Dendritic cell treated with granulocyte-macrophage colony-stimulating factor and Interleukin-4, amounts not matched to agents 40 ng/mL and 50 ng/mL, for 4 days (primary cell): ENCODE measurements at regions of chr16 and their contacts with region 1.

Region 1: DNA sequence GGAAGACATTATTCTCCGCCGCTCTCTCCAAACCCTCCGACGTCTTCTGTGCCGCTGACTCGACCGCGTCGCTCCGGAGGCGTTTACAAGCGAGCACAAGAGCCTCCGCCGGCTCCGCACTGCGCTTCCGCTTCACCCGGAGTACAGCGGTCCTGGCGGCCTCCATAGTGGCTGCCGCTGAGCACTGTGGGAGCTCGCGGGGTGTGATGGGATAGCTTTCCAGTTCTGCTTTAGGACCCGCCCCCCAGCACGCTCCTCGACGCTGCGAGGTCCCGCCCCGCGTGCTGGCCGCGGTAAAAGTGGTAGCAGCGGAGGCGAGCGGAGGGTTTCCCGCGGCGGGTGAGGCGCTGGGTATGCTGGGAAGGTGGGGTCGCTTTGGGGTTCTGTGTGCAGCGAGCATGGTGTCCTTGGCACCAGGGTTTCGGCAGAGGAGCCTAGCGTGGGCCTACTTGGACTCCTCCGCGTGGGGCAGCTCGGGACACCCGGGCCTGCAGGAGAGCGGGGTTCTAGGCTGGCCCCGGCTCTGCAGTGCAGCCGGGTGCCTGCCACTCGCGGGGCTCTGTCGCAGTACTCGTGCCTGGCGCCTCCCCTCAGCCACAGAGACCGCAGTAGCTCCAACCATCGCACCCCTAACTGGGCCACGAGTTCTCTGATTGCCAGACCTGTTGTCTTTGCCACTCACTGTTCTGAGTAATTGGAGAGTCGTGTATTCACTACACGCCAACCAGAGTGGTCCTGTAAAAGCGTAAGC is at the starts of genes PRMT7 and SLC7A6OS:
- H3K4me3 Mint-ChIP-seq: peak within 1 kb of the TSS; percentile 92
- H3K27ac Mint-ChIP-seq: peak within 1 kb of the TSS; percentile 95
- H3K4me1 Mint-ChIP-seq: peaks cover 30% of the 10 kb centered on the region
- H3K27me3 Mint-ChIP-seq: no peaks in the 10 kb centered on the region

Region 2: DNA sequence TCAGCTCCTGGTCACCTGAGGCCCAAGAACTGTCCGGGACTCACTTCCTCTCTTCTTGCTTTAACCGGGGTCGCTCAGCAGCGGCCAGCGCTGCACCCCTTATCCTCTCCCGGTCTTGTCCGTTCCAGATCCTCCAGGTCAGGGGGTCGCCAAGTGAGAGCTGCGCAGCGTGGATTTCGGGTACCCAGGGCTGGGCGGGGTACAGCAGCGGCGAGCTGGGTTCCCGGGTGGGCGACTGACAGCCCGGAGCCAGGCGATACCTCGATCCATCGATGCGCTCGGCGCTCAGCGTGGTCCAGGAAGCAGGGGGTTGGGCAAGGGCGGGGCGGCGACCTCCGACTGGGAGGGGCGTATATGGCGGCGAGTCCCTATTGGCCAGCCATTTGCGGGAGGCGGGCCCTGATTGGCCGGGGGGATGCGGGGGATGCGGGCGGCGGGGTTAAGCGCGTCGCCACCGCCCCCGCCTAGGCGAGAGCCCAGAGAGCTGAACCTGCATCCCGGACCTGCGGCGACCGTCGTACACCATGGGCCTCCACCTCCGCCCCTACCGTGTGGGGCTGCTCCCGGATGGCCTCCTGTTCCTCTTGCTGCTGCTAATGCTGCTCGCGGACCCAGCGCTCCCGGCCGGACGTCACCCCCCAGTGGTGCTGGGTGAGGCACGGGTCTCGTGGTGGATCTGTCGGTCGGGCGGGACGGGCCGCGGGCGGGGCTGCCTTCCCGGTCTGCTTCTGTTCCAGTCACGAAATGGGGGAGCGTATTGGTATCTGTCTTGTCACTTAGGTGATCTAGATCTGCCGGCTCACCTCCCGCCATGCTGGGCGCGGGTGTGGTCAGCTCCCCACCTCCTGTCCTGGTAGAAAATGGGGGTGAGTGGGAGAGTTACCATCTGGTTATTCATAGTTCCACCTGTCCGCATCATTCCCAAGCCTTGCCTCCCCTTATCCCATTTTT is 65.8 kb before region 1 on chr16 and contains the start of gene PLA2G15:
- intact Hi-C with region 1: loop called (anchors 5 kb)
- H3K4me3 Mint-ChIP-seq: peak within 1 kb of the TSS; percentile 95
- H3K27ac Mint-ChIP-seq: peak within 1 kb of the TSS; percentile 88
- H3K4me1 Mint-ChIP-seq: peaks cover 64% of the 10 kb centered on the region
- H3K27me3 Mint-ChIP-seq: no peaks in the 10 kb centered on the region

Region 3: DNA sequence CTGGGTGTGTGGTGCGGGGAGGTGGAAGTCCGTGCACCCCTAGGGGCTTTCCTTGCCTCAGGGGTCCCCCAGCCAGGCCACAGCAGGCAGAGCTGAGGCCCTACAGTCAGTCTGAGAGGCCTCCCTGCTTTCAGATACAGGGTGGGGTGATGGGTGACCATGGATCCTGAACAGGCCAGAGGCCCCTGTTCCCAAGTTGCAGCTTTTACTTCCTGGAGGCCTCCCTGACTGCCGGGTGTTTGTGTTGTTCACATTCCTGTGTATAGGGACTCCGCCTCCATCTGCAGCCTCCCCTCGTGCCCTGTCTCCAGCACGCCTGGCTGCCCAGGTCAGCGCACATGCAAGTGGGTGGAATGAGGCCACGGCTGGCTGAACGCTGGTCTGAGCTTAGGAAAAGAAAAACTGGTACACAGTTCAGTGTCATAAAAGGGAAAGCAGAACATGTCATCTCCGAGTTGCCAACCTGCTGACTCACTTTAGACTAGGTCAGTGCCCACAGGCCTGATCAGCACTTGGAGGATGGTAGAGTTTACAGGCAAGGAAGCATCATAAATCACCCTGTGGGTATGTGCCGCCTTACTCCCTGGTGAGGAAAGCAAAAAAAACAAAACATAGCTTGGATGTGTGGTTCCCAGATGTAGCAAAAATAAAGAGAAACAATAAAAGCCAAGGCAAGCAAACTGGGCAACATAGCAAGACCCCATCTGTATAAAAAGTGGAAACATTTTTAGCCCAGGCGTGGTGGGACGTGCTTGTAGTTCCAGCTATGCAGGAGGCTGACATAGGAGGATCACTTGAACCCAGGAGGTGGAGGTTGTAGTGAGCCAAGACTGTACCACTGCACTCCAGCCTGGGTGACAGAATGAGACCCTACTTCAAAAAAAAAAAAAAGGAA is 52.8 kb before region 1 on chr16:
- intact Hi-C with region 1: loop called (anchors 2 kb)
- H3K4me3 Mint-ChIP-seq: peak overlapping the region; percentile 32
- H3K27ac Mint-ChIP-seq: peak overlapping the region; percentile 81
- H3K4me1 Mint-ChIP-seq: peaks cover 40% of the 10 kb centered on the region
- H3K27me3 Mint-ChIP-seq: no peaks in the 10 kb centered on the region

Region 4: GRCh38 chr16:68264128-68265077 is 46.5 kb before region 1 on chr16 and contains the start of gene SLC7A6:
- intact Hi-C with region 1: loop called (anchors 1 kb)
- H3K4me3 Mint-ChIP-seq: peak within 1 kb of the TSS; percentile 93
- H3K27ac Mint-ChIP-seq: peak within 1 kb of the TSS; percentile 92
- H3K4me1 Mint-ChIP-seq: peaks cover 41% of the 10 kb centered on the region
- H3K27me3 Mint-ChIP-seq: no peaks in the 10 kb centered on the region

Region 5: DNA sequence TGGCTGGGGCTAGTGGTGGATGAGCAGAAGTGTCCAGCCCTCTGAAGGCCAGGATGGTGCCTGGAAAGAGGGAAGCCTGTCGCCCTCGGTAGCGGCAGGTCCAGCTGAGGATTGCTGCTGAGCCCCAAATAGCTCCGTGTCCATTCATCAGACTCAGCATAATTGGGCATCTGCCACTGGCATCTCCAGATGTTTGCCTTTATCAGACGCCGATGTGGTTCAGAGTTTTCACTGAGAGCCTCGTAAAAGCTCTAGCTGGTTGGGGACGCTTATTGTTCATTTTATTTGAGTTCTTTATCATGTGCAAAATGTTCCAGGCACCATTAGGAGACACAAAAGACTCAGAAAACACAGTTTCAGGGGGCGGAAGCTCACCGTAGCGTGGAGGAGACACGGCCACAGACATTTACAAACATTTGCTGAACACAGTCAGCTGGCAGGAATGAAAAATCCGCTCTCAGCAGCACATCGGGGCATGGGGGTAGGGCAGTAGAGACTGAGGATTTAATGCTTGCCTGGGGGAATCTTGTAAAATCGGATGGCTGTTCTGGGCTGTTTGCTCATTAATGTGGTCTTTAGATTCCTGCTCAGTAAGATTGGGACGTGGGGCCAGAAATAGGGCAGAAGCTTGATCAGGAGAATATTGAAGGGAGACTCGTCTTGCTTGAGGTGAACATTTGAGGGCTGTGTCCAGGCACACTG is 95.7 kb after region 1 on chr16:
- intact Hi-C with region 1: no loop called
- H3K4me3 Mint-ChIP-seq: no peak overlapping the region
- H3K27ac Mint-ChIP-seq: no peak overlapping the region
- H3K4me1 Mint-ChIP-seq: no peaks in the 10 kb centered on the region
- H3K27me3 Mint-ChIP-seq: peaks cover 4% of the 10 kb centered on the region